A549 (cell line): ENCODE measurements at regions of chr19 and their contacts with region 1.

Region 1: DNA sequence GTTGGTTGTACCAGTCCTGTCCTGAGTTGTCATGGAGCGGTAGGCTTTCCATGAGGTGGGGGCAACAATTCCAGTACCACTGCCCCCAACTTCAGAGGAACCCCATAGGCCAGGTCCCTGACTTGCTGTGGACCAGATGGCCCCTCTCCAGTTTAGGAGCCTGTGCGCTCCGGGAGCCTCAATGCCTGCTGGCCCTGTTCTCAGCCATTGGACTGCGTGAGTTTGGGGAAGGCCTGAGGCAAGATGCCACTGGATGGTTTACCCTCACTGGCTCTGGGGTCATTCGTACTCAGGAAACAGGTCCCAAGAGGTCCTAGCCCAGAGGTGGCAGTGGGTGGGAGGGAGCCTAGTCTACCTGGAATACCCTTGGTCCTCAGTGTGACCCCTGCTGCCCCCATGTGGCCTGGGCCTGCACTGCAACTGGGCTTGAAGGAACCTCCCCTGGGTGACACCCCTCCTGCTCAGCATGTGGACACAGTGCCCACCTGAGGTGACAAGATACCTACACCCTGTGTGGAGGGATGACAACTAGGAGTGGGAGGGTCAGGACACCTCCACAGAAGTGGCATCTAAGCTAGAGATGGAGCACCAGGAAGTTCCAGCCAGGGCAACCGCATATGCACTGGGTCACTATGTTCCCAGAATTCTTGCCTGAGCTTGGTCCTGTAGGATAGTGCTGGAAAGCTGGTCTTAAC is 6.0 kb upstream of the PRR19 start:
- DNase-seq: peak; percentile 86 to 93
- ATAC-seq: peak; percentile 72 to 84
- H3K4me3 ChIP-seq: no peak overlapping the region
- H3K27ac ChIP-seq: no peak overlapping the region
- H3K4me1 ChIP-seq: peaks cover 6% of the 10 kb centered on the region
- CTCF ChIP-seq: peak; percentile 98
- EP300 ChIP-seq: no peak
- POLR2A ChIP-seq: no peak
- RAD21 ChIP-seq: peak; percentile 83 to 88

Region 2: GRCh38 chr19:42254989-42255765 is 40.8 kb before region 1 on chr19 and contains the start of gene ERF:
- CTCF ChIA-PET with region 1: interaction called, 616 read pairs
- POLR2A ChIA-PET with region 1: no interaction called
- DNase-seq: peak; percentile 96 to 98
- ATAC-seq: peak; percentile 48 to 72
- H3K4me3 ChIP-seq: peak within 1 kb of the TSS; percentile 94
- H3K27ac ChIP-seq: peak within 1 kb of the TSS; percentile 94 to 96
- H3K4me1 ChIP-seq: peaks cover 46% of the 10 kb centered on the region
- CTCF ChIP-seq: no peak
- EP300 ChIP-seq: no peak; a peak in 1 of 5 replicates
- POLR2A ChIP-seq: peak; percentile 96
- RAD21 ChIP-seq: no peak
- polyA plus RNA-seq, gene ERF: 71.9 and 103 TPM in 2 replicates

Region 3: DNA sequence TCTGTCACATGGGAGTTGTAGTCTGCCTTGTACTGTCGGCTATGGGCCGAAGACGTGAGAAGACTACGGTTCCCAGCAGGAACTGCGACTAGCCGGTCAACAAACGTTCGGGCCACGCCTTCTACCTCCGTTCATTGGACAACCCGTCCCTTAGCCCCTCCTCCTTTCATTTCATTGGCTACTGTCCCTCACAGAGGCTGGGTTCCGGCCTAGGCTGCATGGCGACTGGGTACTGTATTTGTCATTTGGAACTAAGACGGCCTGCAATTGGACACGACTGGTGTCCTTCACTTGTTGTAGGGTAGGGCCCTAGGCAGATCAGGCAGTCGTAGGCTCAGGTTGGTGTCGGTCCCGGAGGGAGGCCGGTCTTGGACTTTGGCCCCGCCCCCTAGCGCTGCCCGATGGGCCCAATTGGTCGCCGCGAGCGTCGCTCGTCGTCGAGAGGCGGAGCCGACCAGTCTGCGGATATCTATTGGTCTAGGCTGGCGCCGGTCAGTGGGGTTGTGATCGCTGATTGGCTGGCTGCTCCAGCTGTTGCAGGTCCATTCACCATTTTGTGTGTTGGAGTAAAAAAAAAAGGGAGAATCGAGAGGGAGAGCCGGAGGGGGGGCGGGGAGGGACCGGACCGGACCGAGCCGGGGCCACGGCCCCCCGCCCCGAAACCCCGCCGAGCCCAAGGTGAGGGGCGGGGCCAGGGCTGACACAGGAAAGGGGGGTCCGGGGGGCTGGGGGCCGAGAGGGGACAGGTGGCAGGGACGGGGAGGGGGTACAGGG is 27.1 kb before region 1 on chr19 and contains the start of gene CIC:
- CTCF ChIA-PET with region 1: interaction called, 224 read pairs
- POLR2A ChIA-PET with region 1: no interaction called
- DNase-seq: peak; percentile 100
- ATAC-seq: peak; percentile 80 to 93
- H3K4me3 ChIP-seq: peak within 1 kb of the TSS; percentile 58
- H3K27ac ChIP-seq: peak within 1 kb of the TSS; percentile 87 to 94
- H3K4me1 ChIP-seq: peaks cover 28% of the 10 kb centered on the region
- CTCF ChIP-seq: no peak
- EP300 ChIP-seq: no peak; a peak in 1 of 5 replicates
- POLR2A ChIP-seq: no peak
- RAD21 ChIP-seq: no peak
- polyA plus RNA-seq, gene CIC: 7.2 and 7.7 TPM in 2 replicates

Region 4: GRCh38 chr19:42313096-42313839 is 17.3 kb after region 1 on chr19 and contains the start of gene TMEM145:
- CTCF ChIA-PET with region 1: interaction called, 58 read pairs
- POLR2A ChIA-PET with region 1: no interaction called
- DNase-seq: peak; percentile 67 to 92
- ATAC-seq: peak; percentile 67 to 82
- H3K4me3 ChIP-seq: peak within 1 kb of the TSS; percentile 51
- H3K27ac ChIP-seq: peak within 1 kb of the TSS; percentile 32 to 79; a peak in 5 of 6 replicates
- H3K4me1 ChIP-seq: peaks cover 5% of the 10 kb centered on the region; the same call in 1 of the 3 replicates
- CTCF ChIP-seq: peak; percentile 36
- EP300 ChIP-seq: no peak
- POLR2A ChIP-seq: no peak
- RAD21 ChIP-seq: no peak; a peak in 1 of 5 replicates
- polyA plus RNA-seq, gene TMEM145: 0.71 and 1.8 TPM in 2 replicates